ENCODE measurements at regions of chr19 and their contacts with region 1.

Region 1: DNA sequence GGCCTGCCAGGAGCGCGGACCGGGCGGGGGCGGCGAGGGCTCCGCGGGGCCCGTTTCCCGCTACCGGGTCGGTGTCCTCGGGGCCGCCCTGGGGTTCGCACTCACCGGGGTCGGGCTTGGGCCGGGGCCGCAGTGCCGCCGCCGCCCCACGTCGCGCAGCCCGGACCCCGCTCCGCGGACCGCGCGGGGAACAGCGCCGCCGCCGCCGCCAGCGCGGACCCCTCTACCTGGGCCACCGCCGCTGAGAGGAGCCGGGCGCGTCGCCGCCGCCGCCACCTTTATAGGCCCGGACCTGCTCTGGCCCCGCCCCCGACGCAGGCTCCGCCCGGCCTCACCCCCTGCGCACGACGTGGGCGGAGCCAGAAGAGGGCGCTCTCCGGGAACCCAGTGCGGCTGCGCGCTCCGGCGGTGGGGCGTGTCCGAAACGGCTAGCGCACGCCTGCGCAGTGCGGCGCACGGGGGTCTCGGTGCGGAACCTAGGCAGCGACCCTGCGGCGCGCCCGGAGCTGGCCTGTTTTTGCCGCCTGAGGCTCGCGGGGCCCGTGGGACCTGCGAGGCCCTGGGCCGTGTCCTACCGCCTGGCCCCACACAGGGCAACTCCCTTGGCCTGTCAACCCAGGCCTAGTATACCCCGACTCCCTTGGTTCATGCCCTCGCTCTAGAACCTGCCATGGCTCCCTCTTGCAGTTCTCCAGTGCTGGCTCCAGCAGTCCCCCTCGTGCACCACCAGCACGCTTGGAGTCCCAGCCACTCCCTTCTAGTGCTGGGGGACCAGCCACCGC is at the start of gene MKNK2:
- DNase-seq: peak; percentile 94
- H3K4me3 Mint-ChIP-seq: peak within 1 kb of the TSS; percentile 75
- H3K27ac Mint-ChIP-seq: peak within 1 kb of the TSS; percentile 90
- H3K4me1 Mint-ChIP-seq: peaks cover 58% of the 10 kb centered on the region
- H3K27me3 Mint-ChIP-seq: no peaks in the 10 kb centered on the region
- total RNA-seq, gene MKNK2: 239 to 253 TPM

Region 2: DNA sequence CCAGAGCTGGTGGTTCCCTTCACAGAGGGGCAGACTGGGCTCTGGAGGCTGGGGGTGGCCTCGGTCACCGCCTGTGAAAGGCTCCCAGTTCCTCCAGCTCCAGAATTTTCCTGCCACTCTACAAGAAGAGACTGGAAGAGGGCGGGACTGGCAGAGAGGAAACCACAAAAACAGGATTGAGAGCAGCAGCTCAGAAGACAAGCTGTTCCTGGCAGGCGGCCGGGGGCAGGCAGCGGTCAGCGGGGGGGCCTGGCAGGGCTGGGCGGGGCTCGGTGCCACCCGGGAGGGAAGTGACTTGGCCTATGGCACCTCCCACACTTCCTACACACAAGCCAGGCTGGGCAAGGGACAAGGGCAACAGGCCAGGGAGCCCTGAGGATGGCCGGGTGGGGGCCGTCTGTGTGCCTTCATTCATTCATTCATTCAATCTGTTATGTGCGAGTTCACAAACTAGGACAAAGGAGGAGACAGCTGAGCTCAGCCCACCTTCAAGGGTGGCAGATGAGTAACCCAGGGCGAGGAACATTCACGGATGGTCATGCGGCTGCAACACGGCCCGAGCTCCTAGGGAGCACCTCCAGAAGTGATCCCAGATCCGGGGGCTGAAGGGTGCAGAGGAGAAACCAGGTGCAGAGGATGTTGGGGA is 18.8 kb before region 1 on chr19:
- CTCF ChIA-PET with region 1: interaction called, 3 read pairs
- POLR2A ChIA-PET with region 1: interaction called, 20 read pairs
- DNase-seq: peak; percentile 68
- H3K4me3 Mint-ChIP-seq: peak overlapping the region; percentile 69
- H3K27ac Mint-ChIP-seq: peak overlapping the region; percentile 85
- H3K4me1 Mint-ChIP-seq: peaks cover 36% of the 10 kb centered on the region
- H3K27me3 Mint-ChIP-seq: no peaks in the 10 kb centered on the region

Region 3: DNA sequence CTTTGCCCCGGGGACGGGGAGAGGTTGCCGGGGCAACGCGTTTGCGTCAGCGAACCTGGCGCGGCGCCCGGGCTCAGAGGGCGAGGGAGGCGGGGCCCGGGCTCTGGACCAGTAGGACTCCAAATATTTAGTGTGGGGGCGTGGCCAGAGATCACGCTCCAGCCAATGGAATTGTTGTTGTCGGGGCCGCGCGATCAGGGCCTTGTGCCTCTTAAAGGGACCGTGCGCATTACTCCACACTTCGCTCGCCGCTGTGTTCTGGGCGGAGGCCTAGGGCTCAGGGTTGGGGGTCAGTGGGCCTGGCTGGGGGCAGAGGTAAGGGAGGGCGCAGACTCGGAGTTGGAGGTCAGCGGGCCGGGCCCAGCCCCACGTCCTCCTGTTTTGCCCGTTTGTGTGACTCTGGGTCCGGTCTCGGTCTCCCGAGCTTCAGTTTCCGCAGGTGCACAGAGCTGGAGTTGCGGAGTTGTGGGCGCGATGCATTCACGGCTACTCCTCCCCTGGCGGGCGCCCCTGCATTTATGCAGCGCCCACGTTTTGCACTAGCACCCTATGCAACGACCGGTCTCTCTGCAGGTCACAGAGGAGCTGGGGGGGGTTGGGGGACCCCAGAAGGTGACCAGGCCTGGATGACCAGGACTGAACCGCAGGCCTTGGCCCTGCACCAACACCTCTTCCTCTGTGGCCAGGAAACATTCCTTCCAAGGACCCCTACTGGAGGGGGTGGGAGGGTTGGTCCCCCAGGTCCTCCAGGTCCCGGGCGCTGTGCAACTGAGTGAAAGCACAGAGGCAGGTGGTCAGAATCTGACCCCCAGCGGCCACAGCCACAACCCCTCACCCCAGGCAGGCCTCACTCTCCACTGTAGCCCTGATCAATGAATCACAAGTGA is 10.6 kb after region 1 on chr19:
- CTCF ChIA-PET with region 1: interaction called, 8 read pairs
- POLR2A ChIA-PET with region 1: interaction called, 35 read pairs
- DNase-seq: peak; percentile 99
- H3K4me3 Mint-ChIP-seq: peak overlapping the region; percentile 91
- H3K27ac Mint-ChIP-seq: peak overlapping the region; percentile 86
- H3K4me1 Mint-ChIP-seq: peaks cover 35% of the 10 kb centered on the region
- H3K27me3 Mint-ChIP-seq: no peaks in the 10 kb centered on the region

Region 4: GRCh38 chr19:2110822-2111221 is 59.6 kb after region 1 on chr19:
- CTCF ChIA-PET with region 1: no interaction called
- POLR2A ChIA-PET with region 1: no interaction called
- DNase-seq: no peak
- H3K4me3 Mint-ChIP-seq: no peak overlapping the region
- H3K27ac Mint-ChIP-seq: no peak overlapping the region
- H3K4me1 Mint-ChIP-seq: no peaks in the 10 kb centered on the region
- H3K27me3 Mint-ChIP-seq: no peaks in the 10 kb centered on the region